ENCODE measurements at regions of chr5 and their contacts with region 1.

Region 1: GRCh38 chr5:56342616-56343015 is 109.5 kb upstream of the ANKRD55 start:
- DNase-seq: no peak
- H3K4me3 Mint-ChIP-seq: no peak overlapping the region
- H3K27ac Mint-ChIP-seq: no peak overlapping the region
- H3K4me1 Mint-ChIP-seq: peaks cover 9% of the 10 kb centered on the region
- H3K27me3 Mint-ChIP-seq: peaks cover 1% of the 10 kb centered on the region

Region 2: DNA sequence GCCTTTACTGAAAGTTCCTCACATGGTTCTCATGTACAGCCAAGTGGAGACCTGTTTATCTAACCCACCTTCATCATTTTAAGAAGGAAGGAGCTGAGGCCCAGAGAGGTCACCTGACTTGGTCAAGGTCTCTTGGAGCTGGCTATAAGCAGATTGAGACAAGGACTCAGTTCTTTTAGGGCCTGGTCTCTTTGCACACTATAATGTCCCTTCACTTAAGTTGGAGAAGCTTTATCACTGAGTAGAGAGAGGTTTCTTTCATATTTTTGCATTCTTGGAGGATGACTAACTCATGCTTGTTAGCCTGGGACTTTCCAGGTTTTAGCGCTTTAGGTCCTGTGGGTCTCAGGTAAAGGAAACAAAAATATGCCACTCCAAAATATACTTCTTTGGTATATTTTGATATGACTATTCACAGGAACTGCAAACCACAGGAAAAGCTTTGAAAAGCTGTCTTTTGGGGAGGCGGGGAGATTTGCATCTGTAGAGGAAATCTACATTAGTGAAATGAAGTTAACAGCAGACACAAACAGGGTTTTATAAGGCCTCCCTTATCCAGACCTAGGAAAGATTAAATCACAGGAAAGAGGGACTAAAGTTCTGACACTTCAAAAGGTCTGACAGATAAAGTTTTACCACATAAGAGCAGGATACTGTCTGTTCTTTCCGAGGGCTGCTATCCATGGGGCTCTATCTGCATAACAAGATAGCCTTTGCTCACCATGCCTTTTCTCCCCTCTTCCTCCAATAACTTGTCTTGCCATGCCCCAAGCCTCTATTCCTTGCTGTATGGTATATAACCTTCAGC is 13.7 kb before region 1 on chr5:
- CTCF ChIA-PET with region 1: interaction called, 10 read pairs
- POLR2A ChIA-PET with region 1: no interaction called
- DNase-seq: peak; percentile 67
- H3K4me3 Mint-ChIP-seq: peak overlapping the region; percentile 57
- H3K27ac Mint-ChIP-seq: peak overlapping the region; percentile 92
- H3K4me1 Mint-ChIP-seq: peaks cover 64% of the 10 kb centered on the region
- H3K27me3 Mint-ChIP-seq: no peaks in the 10 kb centered on the region